Endothelial cell of umbilical vein (primary cell): ENCODE measurements at regions of chr12 and their contacts with region 1.

Region 1: DNA sequence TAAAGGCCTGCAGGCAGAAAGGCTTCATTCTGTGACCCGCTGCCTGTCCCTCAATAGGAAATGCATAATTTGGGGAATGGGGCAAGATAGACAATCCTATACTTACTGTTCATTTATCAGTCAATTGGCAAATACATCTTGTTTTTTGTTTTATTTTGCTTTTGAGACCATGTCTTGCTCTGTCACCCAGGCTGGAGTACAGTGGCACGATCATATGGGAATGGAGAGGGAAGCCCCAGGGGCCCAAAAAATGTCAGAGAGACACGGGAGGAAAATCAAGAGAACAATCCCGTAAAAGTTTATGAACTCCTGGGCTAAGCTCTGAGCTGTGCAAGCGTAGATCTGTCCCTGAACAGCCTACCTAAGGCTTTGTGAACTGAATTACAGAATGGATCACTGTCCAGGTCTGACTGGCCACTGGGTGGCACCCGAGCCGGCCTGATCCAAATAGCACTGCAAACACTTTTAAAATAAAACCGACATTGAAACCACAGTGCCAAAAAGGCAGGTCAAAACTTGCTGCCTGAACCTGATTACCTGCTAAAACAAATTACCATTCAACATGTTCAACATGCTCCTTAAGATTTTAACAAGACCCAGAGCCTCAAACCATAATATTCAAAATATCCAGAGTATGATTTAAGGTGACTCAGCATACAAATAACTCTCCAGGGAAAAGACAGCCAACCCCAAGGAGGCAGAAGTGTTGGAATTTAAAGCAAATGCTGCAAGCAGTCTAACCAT is 11.8 kb downstream of the COPS7A start:
- DNase-seq: peak; percentile 63
- H3K4me3 ChIP-seq: no peak overlapping the region
- H3K27ac ChIP-seq: no peak overlapping the region
- H3K4me1 ChIP-seq: no peaks in the 10 kb centered on the region
- H3K27me3 ChIP-seq: no peaks in the 10 kb centered on the region
- CTCF ChIP-seq: peak; percentile 71 to 72
- POLR2A ChIP-seq: no peak

Region 2: GRCh38 chr12:6376079-6376869 is 359.3 kb before region 1 on chr12:
- CTCF ChIA-PET with region 1: no interaction called
- POLR2A ChIA-PET with region 1: no interaction called
- dilution Hi-C with region 1: no loop called
- intact Hi-C with region 1: no loop called
- DNase-seq: peak; percentile 30
- H3K4me3 ChIP-seq: no peak overlapping the region
- H3K27ac ChIP-seq: no peak overlapping the region
- H3K4me1 ChIP-seq: peaks cover 21% of the 10 kb centered on the region
- H3K27me3 ChIP-seq: no peaks in the 10 kb centered on the region
- CTCF ChIP-seq: peak; percentile 18 to 62
- POLR2A ChIP-seq: no peak

Region 3: GRCh38 chr12:6778574-6779550 is 43.2 kb after region 1 on chr12:
- CTCF ChIA-PET with region 1: interaction called, 5 read pairs
- POLR2A ChIA-PET with region 1: no interaction called
- dilution Hi-C with region 1: no loop called
- intact Hi-C with region 1: loop called (anchors 1 kb)
- DNase-seq: peak; percentile 94
- H3K4me3 ChIP-seq: peak overlapping the region in 1 of 3 experiments; percentile 6
- H3K27ac ChIP-seq: no peak overlapping the region
- H3K4me1 ChIP-seq: peaks cover 5% of the 10 kb centered on the region
- H3K27me3 ChIP-seq: no peaks in the 10 kb centered on the region
- CTCF ChIP-seq: peak; percentile 93 to 95
- POLR2A ChIP-seq: peak; percentile 22

Region 4: GRCh38 chr12:6825398-6826124 is 89.9 kb after region 1 on chr12:
- CTCF ChIA-PET with region 1: interaction called, 10 read pairs
- POLR2A ChIA-PET with region 1: interaction called, 6 read pairs
- dilution Hi-C with region 1: no loop called
- intact Hi-C with region 1: loop called (anchors 1 kb)
- DNase-seq: peak; percentile 87
- H3K4me3 ChIP-seq: no peak overlapping the region
- H3K27ac ChIP-seq: no peak overlapping the region
- H3K4me1 ChIP-seq: peaks cover 23% of the 10 kb centered on the region
- H3K27me3 ChIP-seq: peaks cover 3% of the 10 kb centered on the region in 2 experiments
- CTCF ChIP-seq: peak; percentile 95
- POLR2A ChIP-seq: no peak